Right ventricle myocardium inferior (tissue), 1 donor: ENCODE measurements at regions of chr1 and their contacts with region 1.

Region 1: GRCh38 chr1:62131093-62131725 is 63.4 kb upstream of the L1TD1 start:
- DNase-seq: no peak
- ATAC-seq: peak; percentile 43

Region 2: GRCh38 chr1:62082456-62083363 is 48.5 kb before region 1 on chr1:
- intact Hi-C with region 1: loop called (anchors 1 kb)
- DNase-seq: no peak
- ATAC-seq: no peak